CD8-positive, alpha-beta T cell (primary cell): ENCODE measurements at regions of chr6 and their contacts with region 1.

Region 1: GRCh38 chr6:37913210-37913609 is 93.7 kb downstream of the ZFAND3 start:
- DNase-seq: no peak
- ATAC-seq: no peak
- H3K4me3 ChIP-seq: no peak overlapping the region
- H3K4me3 Mint-ChIP-seq: no peak overlapping the region
- H3K27ac ChIP-seq: no peak overlapping the region
- H3K27ac Mint-ChIP-seq: no peak overlapping the region
- H3K4me1 ChIP-seq: peaks cover 24% of the 10 kb centered on the region
- H3K4me1 Mint-ChIP-seq: peaks cover 63% of the 10 kb centered on the region
- H3K27me3 ChIP-seq: no peaks in the 10 kb centered on the region
- H3K27me3 Mint-ChIP-seq: no peaks in the 10 kb centered on the region
- CTCF ChIP-seq: no peak

Region 2: DNA sequence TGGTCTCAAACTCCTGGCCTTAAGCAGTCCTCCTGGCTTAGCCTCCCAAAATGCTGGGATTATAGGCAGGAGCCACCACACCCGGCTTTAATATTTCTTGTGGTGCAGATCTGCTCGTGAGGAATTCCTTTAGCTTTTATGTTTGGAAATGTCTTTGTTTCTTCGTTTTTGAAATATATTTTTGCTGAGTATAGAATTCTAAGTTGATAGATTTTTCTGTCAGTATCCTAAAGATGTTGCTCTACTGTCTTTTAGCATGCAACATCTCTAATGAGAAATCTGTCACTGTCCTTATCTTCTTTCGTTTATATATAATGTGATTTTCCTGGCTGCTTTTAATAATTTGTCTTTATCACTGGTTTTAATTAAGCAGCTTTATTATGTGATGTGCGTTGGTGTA is 18.6 kb before region 1 on chr6:
- CTCF ChIA-PET with region 1: no interaction called
- POLR2A ChIA-PET with region 1: no interaction called
- intact Hi-C with region 1: loop called in 1 of 2 experiments (anchors 2 kb)
- DNase-seq: no peak
- ATAC-seq: no peak
- H3K4me3 ChIP-seq: no peak overlapping the region
- H3K4me3 Mint-ChIP-seq: no peak overlapping the region
- H3K27ac ChIP-seq: no peak overlapping the region
- H3K27ac Mint-ChIP-seq: no peak overlapping the region
- H3K4me1 ChIP-seq: peaks cover 15% of the 10 kb centered on the region
- H3K4me1 Mint-ChIP-seq: peaks cover 57% of the 10 kb centered on the region
- H3K27me3 ChIP-seq: no peaks in the 10 kb centered on the region
- H3K27me3 Mint-ChIP-seq: no peaks in the 10 kb centered on the region
- CTCF ChIP-seq: no peak

Region 3: DNA sequence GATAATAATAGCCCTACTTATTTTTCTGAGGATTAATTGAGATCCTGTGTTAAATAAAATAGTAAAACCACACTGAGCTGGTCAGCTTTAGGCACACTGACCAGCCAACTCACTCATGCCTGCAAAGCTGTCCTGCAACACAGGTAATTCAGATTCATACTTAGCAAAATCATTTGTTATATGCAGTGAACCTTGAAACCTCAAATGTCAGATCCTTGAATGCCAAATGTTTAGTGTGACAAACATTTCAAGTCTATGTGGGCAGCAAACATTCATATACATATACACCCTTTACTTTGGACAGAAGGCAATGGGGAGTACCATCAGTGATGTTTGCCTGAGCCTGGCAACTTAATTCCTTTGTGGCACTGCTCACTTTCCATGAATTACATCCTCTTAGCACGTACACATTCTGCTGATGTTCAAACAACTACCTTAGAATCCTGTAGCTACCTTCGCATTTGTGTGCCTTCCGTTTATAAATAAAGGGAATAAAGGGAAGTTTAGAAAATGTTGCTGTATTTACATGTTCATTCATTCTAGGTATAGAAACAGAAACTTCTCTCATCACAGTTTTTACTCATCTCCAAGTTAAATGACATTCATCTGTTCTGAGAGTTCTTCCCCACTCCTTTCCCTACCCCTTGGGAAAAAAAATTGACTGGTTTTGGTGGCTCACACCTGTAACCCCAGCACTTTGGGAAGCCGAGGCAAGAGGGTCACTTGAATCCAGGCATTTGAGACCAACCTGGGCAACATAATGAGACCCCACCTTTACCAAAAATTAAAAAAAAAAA is 47.1 kb after region 1 on chr6:
- CTCF ChIA-PET with region 1: no interaction called
- POLR2A ChIA-PET with region 1: no interaction called
- intact Hi-C with region 1: no loop called
- DNase-seq: no peak
- ATAC-seq: no peak
- H3K4me3 ChIP-seq: no peak overlapping the region
- H3K4me3 Mint-ChIP-seq: no peak overlapping the region
- H3K27ac ChIP-seq: no peak overlapping the region
- H3K27ac Mint-ChIP-seq: no peak overlapping the region
- H3K4me1 ChIP-seq: peaks cover 36% of the 10 kb centered on the region
- H3K4me1 Mint-ChIP-seq: peaks cover 59% of the 10 kb centered on the region
- H3K27me3 ChIP-seq: no peaks in the 10 kb centered on the region
- H3K27me3 Mint-ChIP-seq: no peaks in the 10 kb centered on the region
- CTCF ChIP-seq: no peak